Stomach (tissue), 19 donors: ENCODE measurements at regions of chr1 and their contacts with region 1.

Region 1: DNA sequence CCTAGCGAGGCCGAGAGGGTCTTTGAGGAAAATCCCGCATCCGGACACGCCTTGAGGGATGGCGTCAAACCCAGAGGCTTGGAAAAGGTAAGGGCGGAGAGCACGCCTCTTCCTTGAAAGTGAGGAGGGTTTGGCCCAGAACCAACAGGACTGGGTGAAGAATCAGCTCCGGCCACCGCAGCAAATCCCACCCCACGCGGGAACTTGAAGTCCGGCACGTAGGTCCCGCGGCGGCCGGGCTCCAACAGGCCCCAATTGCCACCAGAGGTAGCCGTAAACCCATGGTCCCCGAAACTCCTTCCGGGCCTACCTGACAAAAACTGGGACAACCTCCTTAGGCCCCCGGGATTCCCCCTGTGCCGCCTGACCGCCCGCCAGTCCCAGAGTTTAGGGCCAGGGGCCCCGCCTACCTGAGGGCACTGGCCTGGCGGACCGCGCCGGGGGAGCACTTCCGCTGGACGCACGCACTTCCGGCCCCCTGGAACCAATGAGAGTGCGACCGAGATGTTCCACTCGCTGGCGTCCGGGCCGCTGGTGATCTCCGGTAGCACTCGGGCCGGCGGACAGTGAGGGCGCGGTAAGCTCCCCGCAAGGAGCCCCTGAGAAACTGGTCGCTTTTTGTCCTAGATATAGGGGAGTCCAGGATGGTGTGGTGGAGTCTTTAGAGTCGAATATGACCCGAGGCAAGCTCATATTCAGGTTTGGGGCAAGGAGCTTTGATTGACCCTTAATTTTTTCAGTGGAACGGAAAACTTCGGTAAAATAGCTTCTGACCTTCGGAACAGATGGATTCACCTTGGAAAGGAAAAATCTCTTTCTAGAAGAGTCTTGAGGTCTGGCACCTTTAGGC is at the starts of genes LZIC and NMNAT1:
- DNase-seq: peak; percentile 95 to 97
- H3K4me3 ChIP-seq: peak within 1 kb of the TSS; percentile 59 to 89 (median 80)
- H3K27ac ChIP-seq: peak within 1 kb of the TSS; percentile 85 to 92 (median 91)
- H3K4me1 ChIP-seq: peaks cover 14 to 39% (median 26%) of the 10 kb centered on the region in 4 donors
- H3K27me3 ChIP-seq: no peaks in the 10 kb centered on the region
- CTCF ChIP-seq: peak in 1 of 7 experiments; percentile 36
- EP300 ChIP-seq: no peak
- POLR2A ChIP-seq: peak in 1 of 4 donors; percentile 71
- total RNA-seq, gene LZIC: 1.8 to 32.5 (median 10.7) TPM
- total RNA-seq, gene NMNAT1: 8.5 to 18.8 (median 10.6) TPM

Region 2: GRCh38 chr1:10032590-10033358 is 89.6 kb after region 1 on chr1 and contains the start of gene UBE4B:
- intact Hi-C with region 1: loop called (anchors 10 kb)
- DNase-seq: peak; percentile 99 to 100
- H3K4me3 ChIP-seq: peak within 1 kb of the TSS; percentile 84 to 94 (median 86)
- H3K27ac ChIP-seq: peak within 1 kb of the TSS; percentile 91 to 97 (median 94)
- H3K4me1 ChIP-seq: peaks cover 12 to 53% (median 30%) of the 10 kb centered on the region in 4 donors
- H3K27me3 ChIP-seq: no peaks in the 10 kb centered on the region
- CTCF ChIP-seq: peak in 5 of 7 experiments; percentile 63 to 90 (median 77)
- EP300 ChIP-seq: no peak
- POLR2A ChIP-seq: no peak
- total RNA-seq, gene UBE4B: 37.1 to 82.9 (median 42.6) TPM